ENCODE measurements at regions of chr7 and their contacts with region 1.

Region 1: DNA sequence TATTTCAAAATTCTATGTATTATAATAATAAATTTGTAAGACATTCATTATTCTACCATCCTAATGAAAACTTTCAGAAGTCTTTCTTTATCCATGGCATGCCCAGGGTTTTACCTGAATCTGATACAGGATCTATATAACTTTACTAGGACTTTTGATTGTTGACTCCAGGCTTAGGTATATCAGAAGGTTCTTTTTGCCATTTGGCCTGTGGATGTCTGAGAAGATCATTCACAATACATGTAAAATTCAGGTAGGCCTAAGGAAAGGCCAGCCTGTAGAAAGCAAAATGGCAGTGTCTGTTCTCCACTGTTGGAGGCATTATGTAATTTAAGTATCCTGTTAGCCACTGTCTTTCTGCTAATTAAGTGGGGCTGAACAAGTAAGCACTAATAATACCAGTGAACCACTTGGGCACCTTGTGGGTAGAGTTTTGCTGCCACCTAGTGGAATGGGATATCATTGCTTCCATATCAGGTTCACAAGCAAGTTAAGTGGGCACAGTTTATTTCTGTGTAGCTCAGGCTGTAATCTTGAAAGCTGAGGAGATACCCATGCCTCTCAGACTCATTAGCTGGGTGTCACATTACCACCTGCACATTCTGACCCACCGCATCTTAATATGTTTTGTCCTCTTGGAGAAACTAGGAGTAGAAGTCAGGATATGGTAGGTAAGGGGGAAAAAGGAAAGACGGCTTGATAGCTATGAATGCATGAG is 105.5 kb downstream of the SEPTIN7 start:
- DNase-seq: peak in 4 of 5 donors; percentile 47 to 76 (median 56)
- H3K4me3 ChIP-seq: no peak overlapping the region
- H3K27ac ChIP-seq: no peak overlapping the region
- H3K4me1 ChIP-seq: peaks cover 1% of the 10 kb centered on the region
- H3K27me3 ChIP-seq: no peaks in the 10 kb centered on the region
- CTCF ChIP-seq: peak; percentile 86 to 94 (median 92)
- EP300 ChIP-seq: no peak
- POLR2A ChIP-seq: no peak

Region 2: DNA sequence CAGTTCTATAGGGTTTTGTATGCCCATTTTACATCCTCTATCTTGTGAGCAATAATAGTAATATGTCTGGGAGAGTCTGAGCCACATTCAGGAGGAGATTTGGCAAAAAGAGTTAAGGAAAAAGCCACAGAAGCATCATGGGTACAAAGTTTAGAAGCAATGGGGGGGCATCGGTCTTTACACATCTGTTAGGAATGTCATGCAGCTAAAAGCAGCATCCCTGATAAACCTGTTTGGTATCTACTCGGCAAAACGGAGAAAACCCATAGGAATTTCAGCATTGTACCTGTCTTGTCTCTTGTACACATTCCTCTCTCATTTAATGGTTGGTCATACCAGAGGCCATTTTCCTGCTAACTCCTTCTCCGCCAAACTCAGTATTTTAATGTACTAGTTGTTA is 198.9 kb before region 1 on chr7:
- intact Hi-C with region 1: loop called (anchors 2 to 5 kb)
- DNase-seq: no peak
- H3K4me3 ChIP-seq: no peak overlapping the region
- H3K27ac ChIP-seq: no peak overlapping the region
- H3K4me1 ChIP-seq: peaks cover 2% of the 10 kb centered on the region
- H3K27me3 ChIP-seq: no peaks in the 10 kb centered on the region
- CTCF ChIP-seq: no peak
- EP300 ChIP-seq: no peak
- POLR2A ChIP-seq: no peak

Region 3: DNA sequence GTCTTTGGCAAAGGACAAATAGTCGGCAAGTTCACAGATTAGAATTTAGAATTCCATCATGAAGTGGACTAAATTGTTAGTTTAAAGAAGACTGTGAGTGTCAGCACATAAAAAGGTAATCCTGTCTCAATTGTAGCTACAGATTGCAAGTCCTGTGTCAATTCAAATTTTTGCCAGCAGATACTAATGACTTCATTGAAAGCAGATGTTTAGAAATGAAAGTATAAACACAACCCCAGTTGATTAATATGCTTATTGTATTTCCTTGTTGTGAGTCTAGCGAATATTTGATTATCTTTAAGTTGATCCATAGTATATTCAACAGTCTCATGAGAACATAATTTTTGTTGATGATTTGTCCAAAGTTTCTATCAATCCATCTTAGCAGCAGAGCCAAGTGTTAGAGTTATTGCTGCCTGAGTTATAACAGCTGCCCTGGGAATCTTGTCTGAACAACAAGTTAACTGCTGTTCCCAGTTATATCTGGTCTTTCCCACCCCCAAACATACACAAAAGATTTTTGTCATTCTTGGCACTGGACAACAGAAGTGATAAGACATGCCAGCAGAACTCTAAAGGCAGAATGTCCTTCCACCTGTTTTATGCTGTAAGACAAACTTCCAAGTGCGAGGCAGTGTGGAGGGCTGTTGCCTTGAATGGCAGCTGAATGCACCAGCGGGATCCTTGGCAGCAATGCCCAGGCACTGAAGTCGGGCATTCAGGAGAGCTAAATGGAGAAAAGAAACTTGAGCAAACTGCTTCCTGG is 190.1 kb before region 1 on chr7:
- intact Hi-C with region 1: loop called in 1 of 4 experiments (anchors 5 kb)
- DNase-seq: no peak
- H3K4me3 ChIP-seq: no peak overlapping the region
- H3K27ac ChIP-seq: peak overlapping the region in 1 of 2 donors; percentile 35
- H3K4me1 ChIP-seq: peaks cover 5% of the 10 kb centered on the region
- H3K27me3 ChIP-seq: no peaks in the 10 kb centered on the region
- CTCF ChIP-seq: no peak
- EP300 ChIP-seq: no peak
- POLR2A ChIP-seq: no peak